Activated T-helper 1 cell treated with anti-CD3 and anti-CD28 coated beads, Interleukin-12 subunit alpha, Interleukin-12 subunit beta, Interleukin-2, Interleukin-4 antibody, amounts not matched to agents 30 ng/mL and 10 ng/mL and 1 ng/mL, durations not matched to agents 14 hours and 24 hours and 36 hours (primary cell): ENCODE measurements at regions of chr6 and their contacts with region 1.

Region 1: GRCh38 chr6:13711733-13712598 is at the start of gene RANBP9:
- DNase-seq: peak; percentile 86
- H3K4me3 Mint-ChIP-seq: peak within 1 kb of the TSS; percentile 93
- H3K27ac Mint-ChIP-seq: peak within 1 kb of the TSS; percentile 96
- H3K4me1 Mint-ChIP-seq: peaks cover 63% of the 10 kb centered on the region
- H3K27me3 Mint-ChIP-seq: no peaks in the 10 kb centered on the region
- total RNA-seq, gene RANBP9: 58.4 and 60.1 TPM in 2 replicates

Region 2: DNA sequence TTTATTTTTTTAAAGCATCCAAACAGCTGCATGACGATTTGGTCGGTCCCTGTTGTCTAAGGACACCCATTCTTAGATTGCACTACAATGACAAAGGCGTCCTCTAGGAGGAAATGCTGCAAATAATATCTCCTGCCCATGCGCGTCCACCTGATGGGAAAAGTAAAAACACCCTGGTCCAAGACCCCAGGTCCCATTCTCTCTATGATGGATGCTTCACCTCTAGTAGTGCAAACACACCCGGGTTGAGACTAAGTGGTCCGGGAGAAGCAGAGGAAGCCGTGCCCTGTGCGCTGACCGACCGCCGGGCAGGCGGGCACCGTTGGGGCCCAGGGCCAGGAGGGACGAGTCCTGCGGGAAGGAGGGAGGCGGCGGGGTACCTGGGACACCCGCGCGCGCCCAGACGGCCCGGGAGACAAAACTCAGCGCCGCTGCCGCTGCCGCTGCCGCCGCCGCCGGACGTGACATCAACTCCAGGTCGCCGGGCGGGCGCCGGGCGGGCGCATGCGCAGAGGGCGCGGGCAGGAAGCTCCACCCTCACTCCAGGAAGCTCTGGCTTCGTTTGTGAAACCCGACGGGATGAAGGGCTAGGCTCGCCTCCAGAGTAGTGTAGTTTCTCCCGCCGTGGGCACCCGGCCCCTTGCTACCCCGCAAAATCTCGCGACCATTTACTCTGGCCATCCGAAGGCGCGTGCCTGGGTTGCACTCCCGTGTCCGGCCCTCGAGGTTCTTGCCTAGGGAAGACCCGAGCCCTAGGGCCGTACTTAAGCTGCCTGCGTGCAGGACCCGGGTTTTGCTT is 383.7 kb before region 1 on chr6 and contains the start of gene TBC1D7:
- intact Hi-C with region 1: loop called (anchors 5 kb)
- DNase-seq: peak; percentile 93
- H3K4me3 Mint-ChIP-seq: peak within 1 kb of the TSS; percentile 84
- H3K27ac Mint-ChIP-seq: peak within 1 kb of the TSS; percentile 92
- H3K4me1 Mint-ChIP-seq: peaks cover 38% of the 10 kb centered on the region
- H3K27me3 Mint-ChIP-seq: peaks cover 2% of the 10 kb centered on the region
- total RNA-seq, gene TBC1D7: 27.3 and 28.2 TPM in 2 replicates

Region 3: GRCh38 chr6:13487122-13488014 is 224.6 kb before region 1 on chr6 and contains the start of gene GFOD1:
- intact Hi-C with region 1: loop called (anchors 5 kb)
- DNase-seq: peak; percentile 80
- H3K4me3 Mint-ChIP-seq: peak within 1 kb of the TSS; percentile 89
- H3K27ac Mint-ChIP-seq: peak within 1 kb of the TSS; percentile 72
- H3K4me1 Mint-ChIP-seq: peaks cover 39% of the 10 kb centered on the region
- H3K27me3 Mint-ChIP-seq: peaks cover 10% of the 10 kb centered on the region
- total RNA-seq, gene GFOD1: 12.4 and 13.6 TPM in 2 replicates

Region 4: GRCh38 chr6:13624871-13625288 is 87.1 kb before region 1 on chr6:
- intact Hi-C with region 1: loop called (anchors 2 kb)
- DNase-seq: no peak
- H3K4me3 Mint-ChIP-seq: no peak overlapping the region
- H3K27ac Mint-ChIP-seq: peak overlapping the region; percentile 36
- H3K4me1 Mint-ChIP-seq: peaks cover 34% of the 10 kb centered on the region
- H3K27me3 Mint-ChIP-seq: no peaks in the 10 kb centered on the region

Region 5: GRCh38 chr6:13695252-13695651 is 16.7 kb before region 1 on chr6:
- intact Hi-C with region 1: loop called (anchors 2 kb)
- DNase-seq: no peak
- H3K4me3 Mint-ChIP-seq: peak overlapping the region; percentile 59
- H3K27ac Mint-ChIP-seq: peak overlapping the region; percentile 67
- H3K4me1 Mint-ChIP-seq: peaks cover 53% of the 10 kb centered on the region
- H3K27me3 Mint-ChIP-seq: no peaks in the 10 kb centered on the region

Region 6: DNA sequence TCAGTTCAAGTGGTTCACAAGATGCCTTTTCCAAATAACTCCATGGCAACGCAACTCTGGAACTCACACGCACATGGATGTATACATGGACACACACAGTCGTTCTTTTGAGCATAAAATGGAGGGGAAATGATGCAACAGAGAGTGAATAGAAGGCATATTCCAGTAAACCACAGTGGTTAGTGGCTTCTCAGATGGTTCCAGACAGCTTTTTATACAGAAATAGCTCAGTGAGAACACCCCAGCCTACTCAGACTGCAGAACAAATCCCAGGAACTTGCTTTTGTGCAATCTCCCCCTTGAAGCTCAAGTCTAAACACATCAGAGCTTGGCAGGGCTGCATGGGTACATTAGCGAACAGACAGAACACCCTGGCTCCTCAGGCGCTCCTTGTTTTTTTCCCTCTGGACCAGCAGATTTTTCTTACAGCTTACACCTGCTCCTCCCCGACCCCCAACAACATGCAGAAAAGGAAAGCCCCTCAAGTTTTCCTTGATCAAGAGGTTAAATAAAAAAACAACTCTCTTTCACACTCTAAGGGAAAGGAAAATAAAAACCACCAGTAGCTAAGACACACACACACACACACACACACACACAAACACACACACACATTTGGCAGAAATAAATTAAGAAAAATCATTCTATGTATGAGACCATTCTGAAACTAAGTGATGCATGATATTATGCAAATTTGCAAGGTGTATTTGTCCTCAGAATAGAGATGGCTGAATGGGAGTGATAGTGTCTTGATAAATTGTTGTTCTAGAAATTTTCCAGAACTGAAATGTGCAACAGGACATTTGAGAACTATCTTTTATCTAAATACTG is 50.9 kb after region 1 on chr6:
- intact Hi-C with region 1: loop called (anchors 1 kb)
- DNase-seq: peak; percentile 34
- H3K4me3 Mint-ChIP-seq: peak overlapping the region; percentile 75
- H3K27ac Mint-ChIP-seq: peak overlapping the region; percentile 92
- H3K4me1 Mint-ChIP-seq: peaks cover 52% of the 10 kb centered on the region
- H3K27me3 Mint-ChIP-seq: peaks cover 2% of the 10 kb centered on the region

Region 7: DNA sequence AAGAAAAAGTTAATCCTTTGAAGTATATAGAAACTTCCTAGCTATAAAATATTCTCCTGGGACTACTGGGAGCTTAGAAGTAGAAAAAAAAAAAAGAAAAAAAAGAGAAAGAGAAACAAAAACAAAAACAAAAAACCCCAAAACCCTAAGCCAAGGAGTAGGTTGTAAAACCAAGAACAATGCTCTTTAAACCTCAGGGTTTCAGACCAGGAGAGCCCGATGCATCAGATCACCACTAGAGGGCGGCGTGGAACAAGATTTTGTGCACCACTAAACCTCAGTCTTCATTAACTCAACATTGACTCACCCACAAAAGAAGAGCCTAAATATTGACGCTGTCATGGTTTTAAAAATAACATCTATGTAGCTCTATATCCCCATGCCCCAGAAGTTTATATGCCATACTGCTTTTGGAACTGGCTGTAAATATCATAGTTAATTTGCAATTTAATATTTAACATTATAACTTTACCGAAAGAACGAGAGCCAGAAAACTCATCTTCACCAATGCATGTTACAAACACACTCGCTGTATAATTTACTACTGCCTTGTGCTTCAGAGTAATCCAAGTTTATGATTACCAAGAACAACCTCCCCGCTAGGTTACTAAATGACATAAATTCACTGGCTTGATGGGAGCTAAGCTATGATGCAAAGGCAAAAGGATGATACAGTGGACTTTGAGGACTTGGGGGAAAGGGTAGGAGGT is 83.2 kb after region 1 on chr6:
- intact Hi-C with region 1: loop called (anchors 2 kb)
- DNase-seq: peak; percentile 75
- H3K4me3 Mint-ChIP-seq: peak overlapping the region; percentile 5
- H3K27ac Mint-ChIP-seq: peak overlapping the region; percentile 40
- H3K4me1 Mint-ChIP-seq: peaks cover 21% of the 10 kb centered on the region
- H3K27me3 Mint-ChIP-seq: no peaks in the 10 kb centered on the region